Activated naive CD8-positive, alpha-beta T cell treated with anti-CD3 and anti-CD28 coated beads, Interleukin-2, amount 10 ng/mL, durations not matched to agents 7 days and 5 days (primary cell): ENCODE measurements at regions of chr17 and their contacts with region 1.

Region 1: DNA sequence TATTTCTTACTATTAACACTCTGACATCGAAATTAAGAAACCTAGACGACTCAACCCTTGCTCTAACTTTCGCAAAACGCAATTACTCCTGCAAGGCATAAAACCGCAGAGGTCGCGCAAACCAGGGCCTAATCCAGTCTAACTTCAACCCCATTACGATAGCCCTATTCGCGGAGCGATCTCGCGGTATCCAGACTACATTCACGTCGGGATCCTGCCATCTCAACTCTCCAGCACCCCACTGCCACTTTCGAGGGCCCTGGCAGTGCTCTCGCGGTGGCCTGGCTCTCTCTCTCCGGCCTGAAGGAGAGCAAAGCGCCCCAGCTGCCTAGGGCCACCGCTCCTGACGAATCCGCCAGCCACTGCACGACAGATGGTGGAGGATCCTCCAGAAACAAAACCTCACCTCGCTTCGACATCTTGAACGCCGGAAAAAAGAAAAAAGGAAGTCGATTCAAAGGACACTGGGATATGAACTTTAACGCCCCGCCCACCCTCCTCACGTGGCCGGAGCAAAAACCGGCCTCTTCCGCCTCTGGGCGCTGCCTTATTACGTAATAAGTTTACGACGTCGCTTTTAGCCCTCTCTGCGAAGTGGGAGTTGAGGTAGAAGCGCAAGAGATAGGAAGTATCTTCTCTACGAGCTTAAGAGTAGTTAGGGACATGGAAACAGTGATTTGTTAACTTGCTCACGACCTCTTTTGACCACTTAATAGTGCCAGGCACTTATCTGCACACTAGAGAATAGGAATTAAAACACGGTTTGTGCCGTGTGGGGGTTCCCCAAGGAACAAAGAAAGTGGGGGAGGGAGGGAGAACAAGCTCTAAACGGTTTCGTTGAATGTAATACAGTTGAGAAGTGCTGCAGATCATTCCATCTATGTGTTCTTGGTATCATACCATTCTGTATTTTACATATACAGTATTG is at the start of gene RPL23:
- DNase-seq: peak; percentile 82
- ATAC-seq: peak; percentile 79
- H3K4me3 Mint-ChIP-seq: peak within 1 kb of the TSS; percentile 95
- H3K27ac Mint-ChIP-seq: peak within 1 kb of the TSS; percentile 99
- H3K4me1 Mint-ChIP-seq: peaks cover 35% of the 10 kb centered on the region
- H3K27me3 Mint-ChIP-seq: no peaks in the 10 kb centered on the region
- total RNA-seq, gene RPL23: 1,166 to 1,188 TPM

Region 2: GRCh38 chr17:38786372-38786771 is 67.2 kb before region 1 on chr17:
- POLR2A ChIA-PET with region 1: no interaction called
- DNase-seq: no peak
- ATAC-seq: no peak
- H3K4me3 Mint-ChIP-seq: no peak overlapping the region
- H3K27ac Mint-ChIP-seq: no peak overlapping the region
- H3K4me1 Mint-ChIP-seq: peaks cover 5% of the 10 kb centered on the region
- H3K27me3 Mint-ChIP-seq: no peaks in the 10 kb centered on the region

Region 3: GRCh38 chr17:38824899-38825761 is 28.4 kb before region 1 on chr17 and contains the start of gene CWC25:
- POLR2A ChIA-PET with region 1: interaction called, 30 read pairs
- DNase-seq: peak; percentile 99
- ATAC-seq: peak; percentile 77
- H3K4me3 Mint-ChIP-seq: peak within 1 kb of the TSS; percentile 100
- H3K27ac Mint-ChIP-seq: peak within 1 kb of the TSS; percentile 99
- H3K4me1 Mint-ChIP-seq: peaks cover 22% of the 10 kb centered on the region
- H3K27me3 Mint-ChIP-seq: no peaks in the 10 kb centered on the region
- total RNA-seq, gene CWC25: 35.2 to 37.5 TPM

Region 4: DNA sequence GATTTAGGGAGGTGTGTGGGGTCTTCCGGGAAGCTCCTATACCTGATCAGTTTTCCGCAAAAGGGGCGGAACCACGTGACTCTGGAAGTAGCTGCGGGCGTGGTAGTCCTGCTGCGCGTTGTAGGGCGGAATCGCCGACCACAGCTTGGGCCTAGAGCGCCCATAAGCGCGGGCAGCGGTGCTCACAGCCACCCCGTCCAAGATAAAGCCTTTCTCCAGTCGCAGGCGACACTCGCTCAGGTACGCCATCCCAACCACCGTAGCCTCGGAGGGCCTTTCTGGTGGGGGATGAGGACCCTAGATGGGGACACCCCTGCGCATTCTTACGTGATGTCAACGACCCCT is 12.4 kb before region 1 on chr17:
- POLR2A ChIA-PET with region 1: interaction called, 13 read pairs
- DNase-seq: peak; percentile 43
- ATAC-seq: peak; percentile 66
- H3K4me3 Mint-ChIP-seq: peak overlapping the region; percentile 79
- H3K27ac Mint-ChIP-seq: peak overlapping the region; percentile 54
- H3K4me1 Mint-ChIP-seq: peaks cover 5% of the 10 kb centered on the region
- H3K27me3 Mint-ChIP-seq: no peaks in the 10 kb centered on the region

Region 5: GRCh38 chr17:38879878-38880682 is 26.5 kb after region 1 on chr17:
- POLR2A ChIA-PET with region 1: interaction called, 14 read pairs
- DNase-seq: no peak
- ATAC-seq: peak; percentile 28
- H3K4me3 Mint-ChIP-seq: peak overlapping the region; percentile 80
- H3K27ac Mint-ChIP-seq: peak overlapping the region; percentile 89
- H3K4me1 Mint-ChIP-seq: peaks cover 86% of the 10 kb centered on the region
- H3K27me3 Mint-ChIP-seq: no peaks in the 10 kb centered on the region

Region 6: DNA sequence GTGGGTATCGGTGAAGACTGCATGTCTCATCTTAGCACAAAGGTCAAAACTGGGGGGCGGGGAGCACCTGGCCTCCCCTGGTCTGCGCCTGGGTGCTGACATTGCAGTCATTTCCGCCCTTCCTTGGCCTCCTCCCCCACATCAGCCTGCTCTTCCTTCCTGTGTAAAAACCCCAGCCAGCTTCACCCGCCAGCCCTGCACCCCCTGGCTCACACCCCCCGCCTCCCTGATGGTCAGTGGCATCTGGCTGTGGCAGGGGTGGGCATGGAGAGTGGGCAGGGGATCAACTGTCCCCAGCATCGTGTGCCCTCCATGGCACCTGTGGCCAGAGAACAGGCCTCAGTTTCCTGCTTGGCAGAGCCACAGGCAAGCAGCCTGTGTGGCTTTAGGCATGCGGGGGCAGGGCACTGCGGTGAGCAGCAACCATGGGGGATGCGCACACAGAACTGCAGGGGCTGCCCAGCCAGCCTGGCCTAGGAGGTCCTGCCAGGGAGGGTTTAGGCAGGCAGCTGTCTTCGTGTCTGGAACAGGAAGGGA is 45.3 kb after region 1 on chr17:
- POLR2A ChIA-PET with region 1: interaction called, 26 read pairs
- DNase-seq: peak; percentile 81
- ATAC-seq: peak; percentile 71
- H3K4me3 Mint-ChIP-seq: peak overlapping the region; percentile 68
- H3K27ac Mint-ChIP-seq: peak overlapping the region; percentile 91
- H3K4me1 Mint-ChIP-seq: peaks cover 63% of the 10 kb centered on the region
- H3K27me3 Mint-ChIP-seq: no peaks in the 10 kb centered on the region

Region 7: GRCh38 chr17:38922538-38923297 is 69.2 kb after region 1 on chr17:
- POLR2A ChIA-PET with region 1: interaction called, 11 read pairs
- DNase-seq: no peak
- ATAC-seq: no peak
- H3K4me3 Mint-ChIP-seq: no peak overlapping the region
- H3K27ac Mint-ChIP-seq: peak overlapping the region; percentile 58
- H3K4me1 Mint-ChIP-seq: peaks cover 38% of the 10 kb centered on the region
- H3K27me3 Mint-ChIP-seq: no peaks in the 10 kb centered on the region

Region 8: GRCh38 chr17:39174907-39175694 is 321.5 kb after region 1 on chr17:
- POLR2A ChIA-PET with region 1: no interaction called
- DNase-seq: peak; percentile 80
- ATAC-seq: peak; percentile 79
- H3K4me3 Mint-ChIP-seq: no peak overlapping the region
- H3K27ac Mint-ChIP-seq: peak overlapping the region; percentile 21
- H3K4me1 Mint-ChIP-seq: peaks cover 25% of the 10 kb centered on the region
- H3K27me3 Mint-ChIP-seq: peaks cover 9% of the 10 kb centered on the region